Caco-2 (cell line): ENCODE measurements at regions of chr1 and their contacts with region 1.

Region 1: DNA sequence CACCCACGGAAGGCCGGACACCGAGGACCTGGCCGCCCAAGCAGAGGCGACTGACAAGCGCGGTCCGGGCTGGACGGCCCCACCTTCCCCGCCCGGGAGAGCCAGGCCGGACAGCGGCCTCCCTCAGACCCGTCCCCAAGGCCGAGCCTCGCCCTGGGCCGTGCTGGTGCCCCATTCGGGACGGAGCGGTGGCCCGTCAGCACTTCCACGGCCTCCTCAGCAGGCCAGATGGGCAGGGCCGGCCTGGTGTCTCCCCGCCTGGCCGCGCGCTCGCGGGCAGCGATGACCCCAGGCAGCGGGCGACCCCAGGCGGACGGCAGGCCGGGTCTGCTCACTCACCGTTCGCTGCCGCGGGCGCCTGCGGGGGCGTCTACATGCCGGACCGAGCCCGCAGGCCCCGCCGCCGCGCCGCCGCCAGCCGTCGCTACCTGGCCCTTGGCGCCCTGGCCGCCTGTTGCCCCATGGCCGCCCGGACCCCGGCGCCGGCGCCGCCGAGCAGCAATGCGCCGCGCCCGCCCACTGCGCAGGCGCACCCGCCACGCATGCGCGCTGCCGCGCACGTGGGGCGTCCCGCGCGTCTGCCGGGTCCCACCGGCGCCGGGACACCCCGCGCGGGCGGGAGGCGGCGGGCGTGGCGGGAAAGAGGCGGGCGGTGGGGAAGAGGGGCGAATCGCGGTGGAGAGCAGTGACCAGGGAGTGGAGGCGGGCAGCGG is at the start of gene NADK:
- DNase-seq: peak; percentile 59 to 85
- H3K4me3 ChIP-seq: peak within 1 kb of the TSS; percentile 94
- H3K4me3 Mint-ChIP-seq: peak within 1 kb of the TSS; percentile 80
- H3K27ac Mint-ChIP-seq: peak within 1 kb of the TSS; percentile 90
- H3K4me1 ChIP-seq: peaks cover 26% of the 10 kb centered on the region
- H3K4me1 Mint-ChIP-seq: peaks cover 18% of the 10 kb centered on the region
- H3K27me3 ChIP-seq: no peaks in the 10 kb centered on the region
- H3K27me3 Mint-ChIP-seq: no peaks in the 10 kb centered on the region
- CTCF ChIP-seq: no peak
- total RNA-seq, gene NADK: 76.7 and 85.8 TPM in 2 replicates

Region 2: DNA sequence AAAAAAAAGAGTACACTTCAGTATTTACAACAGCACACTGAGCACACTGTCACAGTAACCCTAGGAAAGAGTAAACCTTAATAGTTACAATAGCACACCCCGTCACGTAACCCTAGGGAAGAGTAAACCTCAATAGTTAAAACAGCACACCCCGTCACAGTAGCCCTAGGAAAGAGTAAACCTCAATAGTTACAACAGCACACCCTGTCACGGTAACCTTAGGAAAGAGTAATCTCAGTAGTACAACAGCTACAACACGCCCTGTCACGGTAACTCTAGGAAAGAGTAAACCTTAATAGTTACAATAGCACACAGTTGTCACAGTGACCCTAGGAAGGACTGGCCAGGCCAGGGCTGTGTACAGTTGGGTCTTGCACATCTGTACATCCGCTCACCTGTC is 56.9 kb before region 1 on chr1:
- CTCF ChIA-PET with region 1: no interaction called
- POLR2A ChIA-PET with region 1: interaction called, 11 read pairs
- intact Hi-C with region 1: no loop called
- DNase-seq: no peak
- H3K4me3 ChIP-seq: no peak overlapping the region
- H3K4me3 Mint-ChIP-seq: no peak overlapping the region
- H3K27ac Mint-ChIP-seq: no peak overlapping the region
- H3K4me1 ChIP-seq: no peaks in the 10 kb centered on the region
- H3K4me1 Mint-ChIP-seq: no peaks in the 10 kb centered on the region
- H3K27me3 ChIP-seq: no peaks in the 10 kb centered on the region
- H3K27me3 Mint-ChIP-seq: no peaks in the 10 kb centered on the region
- CTCF ChIP-seq: no peak

Region 3: GRCh38 chr1:1858382-1859086 is 80.4 kb after region 1 on chr1:
- CTCF ChIA-PET with region 1: no interaction called
- POLR2A ChIA-PET with region 1: no interaction called
- intact Hi-C with region 1: loop called (anchors 5 kb)
- DNase-seq: peak; percentile 57 to 62
- H3K4me3 ChIP-seq: no peak overlapping the region
- H3K4me3 Mint-ChIP-seq: peak overlapping the region; percentile 63
- H3K27ac Mint-ChIP-seq: peak overlapping the region; percentile 95
- H3K4me1 ChIP-seq: peaks cover 29% of the 10 kb centered on the region
- H3K4me1 Mint-ChIP-seq: peaks cover 12% of the 10 kb centered on the region
- H3K27me3 ChIP-seq: no peaks in the 10 kb centered on the region
- H3K27me3 Mint-ChIP-seq: no peaks in the 10 kb centered on the region
- CTCF ChIP-seq: peak in 1 of 2 experiments; percentile 30

Region 4: GRCh38 chr1:1960480-1961196 is 182.5 kb after region 1 on chr1:
- CTCF ChIA-PET with region 1: no interaction called
- POLR2A ChIA-PET with region 1: no interaction called
- intact Hi-C with region 1: no loop called
- DNase-seq: no peak
- H3K4me3 ChIP-seq: no peak overlapping the region
- H3K4me3 Mint-ChIP-seq: no peak overlapping the region
- H3K27ac Mint-ChIP-seq: no peak overlapping the region
- H3K4me1 ChIP-seq: 0 out of 2 replicates have a peak, but pooled peaks cover 6% of the 10 kb centered on the region
- H3K4me1 Mint-ChIP-seq: no peaks in the 10 kb centered on the region
- H3K27me3 ChIP-seq: no peaks in the 10 kb centered on the region
- H3K27me3 Mint-ChIP-seq: no peaks in the 10 kb centered on the region
- CTCF ChIP-seq: no peak